ENCODE measurements at regions of chrX and their contacts with region 1.

Region 1: DNA sequence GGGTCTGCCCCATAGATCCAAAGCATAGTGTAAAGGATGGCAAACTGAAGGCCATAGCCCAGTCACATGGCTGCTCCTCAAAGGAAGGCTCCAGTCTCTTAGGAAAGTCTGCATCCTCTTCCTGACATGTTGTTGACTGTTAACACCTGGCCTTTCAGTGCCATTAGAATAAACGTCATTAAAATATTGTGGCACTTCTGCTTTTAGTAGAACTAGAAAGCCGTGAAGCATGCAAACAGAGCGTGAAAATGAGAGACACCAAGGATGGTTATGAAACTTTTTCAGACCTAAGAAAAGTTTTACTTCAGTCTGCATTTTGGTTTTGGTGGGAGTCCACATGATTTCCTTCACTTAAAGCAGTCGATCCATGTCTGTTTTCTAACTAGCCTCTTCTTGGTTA is 41.1 kb upstream of the AFF2 start:
- DNase-seq: peak; percentile 74
- ATAC-seq: peak; percentile 93
- H3K4me3 ChIP-seq: peak overlapping the region in 1 of 5 experiments; percentile 29
- H3K4me3 Mint-ChIP-seq: peak overlapping the region; percentile 71
- H3K27ac ChIP-seq: peak overlapping the region; percentile 47 to 78
- H3K27ac Mint-ChIP-seq: peak overlapping the region; percentile 91
- H3K4me1 ChIP-seq: peaks cover 32 to 37% of the 10 kb centered on the region in 2 donors
- H3K4me1 Mint-ChIP-seq: peaks cover 43% of the 10 kb centered on the region
- H3K27me3 ChIP-seq: no peaks in the 10 kb centered on the region
- H3K27me3 Mint-ChIP-seq: no peaks in the 10 kb centered on the region
- CTCF ChIP-seq: no peak

Region 2: GRCh38 chrX:148417934-148418333 is 41.4 kb before region 1 on chrX:
- CTCF ChIA-PET with region 1: no interaction called
- POLR2A ChIA-PET with region 1: no interaction called
- intact Hi-C with region 1: loop called (anchors 5 kb)
- DNase-seq: peak; percentile 3
- ATAC-seq: no peak
- H3K4me3 ChIP-seq: no peak overlapping the region
- H3K4me3 Mint-ChIP-seq: no peak overlapping the region
- H3K27ac ChIP-seq: no peak overlapping the region
- H3K27ac Mint-ChIP-seq: no peak overlapping the region
- H3K4me1 ChIP-seq: peaks cover 8 to 10% of the 10 kb centered on the region in 2 donors
- H3K4me1 Mint-ChIP-seq: peaks cover 15% of the 10 kb centered on the region
- H3K27me3 ChIP-seq: no peaks in the 10 kb centered on the region
- H3K27me3 Mint-ChIP-seq: no peaks in the 10 kb centered on the region
- CTCF ChIP-seq: no peak

Region 3: DNA sequence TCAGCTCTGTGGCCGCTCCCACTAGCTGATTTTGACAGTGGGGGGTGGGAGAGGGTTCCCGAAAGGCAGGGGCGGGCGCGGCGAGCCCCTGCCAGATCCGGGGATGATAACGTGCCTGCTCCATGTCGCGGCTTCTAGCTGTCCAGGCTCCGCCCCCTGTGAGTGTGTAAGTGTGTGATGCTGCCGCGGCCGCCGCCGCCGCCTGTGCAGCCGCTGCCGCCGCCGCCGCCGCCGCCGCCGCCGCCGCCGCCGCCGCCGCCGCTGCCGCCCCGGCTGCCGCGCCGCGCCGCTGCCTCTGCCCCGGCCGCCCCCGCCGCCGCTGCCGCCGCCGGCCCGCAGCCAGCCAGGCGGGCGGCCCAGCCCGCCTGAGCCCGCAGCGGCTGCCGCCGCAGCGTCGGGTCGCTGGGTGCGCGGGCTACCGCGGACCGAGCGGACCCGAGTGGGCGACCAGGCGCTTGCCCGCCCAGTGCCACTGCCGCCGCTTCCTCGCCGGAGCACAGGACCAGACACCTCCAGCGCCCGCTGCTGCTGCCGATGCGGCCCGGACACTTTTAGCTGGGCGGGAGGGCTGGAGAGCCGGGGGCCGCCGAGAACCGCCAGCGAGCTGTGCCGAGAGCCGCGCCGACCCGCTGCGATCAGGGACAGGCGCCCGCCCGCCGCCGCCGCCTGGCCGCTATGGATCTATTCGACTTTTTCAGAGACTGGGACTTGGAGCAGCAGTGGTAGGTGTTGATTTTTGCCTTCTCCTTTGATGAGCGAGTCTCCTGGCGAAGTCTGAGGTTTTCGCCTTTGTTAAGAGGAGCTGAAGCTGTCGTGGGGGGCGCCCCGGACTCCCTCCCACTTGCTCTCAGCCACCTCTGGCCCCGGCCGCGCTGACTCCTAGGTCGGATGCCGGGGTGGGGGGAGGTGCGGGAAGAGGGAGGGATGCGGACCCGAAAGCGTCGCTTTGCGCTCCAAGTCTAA is 41.4 kb after region 1 on chrX and contains the start of gene AFF2:
- CTCF ChIA-PET with region 1: interaction called, 3 read pairs
- POLR2A ChIA-PET with region 1: no interaction called
- intact Hi-C with region 1: loop called (anchors 1 kb)
- DNase-seq: peak; percentile 66
- ATAC-seq: peak; percentile 74
- H3K4me3 ChIP-seq: peak within 1 kb of the TSS; percentile 34 to 62 (median 51)
- H3K4me3 Mint-ChIP-seq: peak within 1 kb of the TSS; percentile 88
- H3K27ac ChIP-seq: no peak within 1 kb of the TSS
- H3K27ac Mint-ChIP-seq: peak within 1 kb of the TSS; percentile 20
- H3K4me1 ChIP-seq: peaks cover 10 to 16% of the 10 kb centered on the region in 2 donors
- H3K4me1 Mint-ChIP-seq: peaks cover 8% of the 10 kb centered on the region
- H3K27me3 ChIP-seq: peaks cover 0 to 27% (median 12%) of the 10 kb centered on the region in 4 experiments
- H3K27me3 Mint-ChIP-seq: peaks cover 9% of the 10 kb centered on the region
- CTCF ChIP-seq: no peak
- total RNA-seq, gene AFF2: 12.0 and 12.9 TPM in 2 replicates

Measured in B cell (primary cell).